Gastrocnemius medialis (tissue), 4 donors: ENCODE measurements at regions of chr20 and their contacts with region 1.

Region 1: DNA sequence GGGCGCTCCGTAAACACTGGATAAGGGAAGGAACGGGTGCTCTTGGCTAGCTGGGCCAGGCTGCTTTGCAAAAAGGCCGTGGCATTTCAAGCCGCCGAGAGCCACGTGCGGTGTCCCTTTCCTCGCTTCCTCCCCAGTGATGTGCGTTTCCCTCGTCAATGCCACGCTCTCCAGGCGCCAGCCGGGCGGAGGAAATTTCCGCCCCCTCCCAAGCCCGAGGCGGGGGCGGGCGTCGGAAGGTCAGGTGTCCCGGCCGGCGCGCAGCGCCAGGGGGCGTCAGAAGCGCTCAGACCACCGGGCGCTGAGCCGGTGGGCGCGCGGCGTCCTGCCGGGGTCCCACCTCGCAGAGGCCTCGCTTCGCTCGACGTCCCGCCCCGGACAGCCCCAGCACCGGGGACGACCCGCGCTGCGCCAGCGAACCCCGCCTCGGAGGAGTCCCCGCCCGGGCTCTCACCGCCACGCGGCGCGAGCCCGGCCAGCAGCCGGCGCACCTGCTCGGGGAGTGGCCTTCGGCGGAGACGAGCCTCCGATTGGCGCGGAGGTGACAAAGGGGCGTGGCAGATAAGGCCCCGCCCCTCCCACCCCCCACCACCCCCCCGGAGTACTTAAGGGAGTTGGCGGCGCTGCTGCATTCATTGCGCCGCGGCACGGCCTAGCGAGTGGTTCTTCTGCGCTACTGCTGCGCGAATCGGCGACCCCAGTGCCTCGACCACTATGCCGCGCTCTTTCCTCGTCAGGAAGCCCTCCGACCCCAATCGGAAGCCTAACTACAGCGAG is at the start of gene SNAI1:
- DNase-seq: peak; percentile 71 to 79
- ATAC-seq: peak; percentile 83 to 86
- H3K4me3 ChIP-seq: peak within 1 kb of the TSS; percentile 48 to 69 (median 56)
- H3K27ac ChIP-seq: peak within 1 kb of the TSS; percentile 75 to 81 (median 78)
- H3K4me1 ChIP-seq: peaks cover 28 to 38% of the 10 kb centered on the region in 2 donors
- H3K27me3 ChIP-seq: no peaks in the 10 kb centered on the region
- CTCF ChIP-seq: peak; percentile 39 to 80 (median 71)
- POLR2A ChIP-seq: peak; percentile 77
- total RNA-seq, gene SNAI1: 0.61 to 3.5 (median 1.3) TPM

Region 2: GRCh38 chr20:50070991-50071888 is 88.7 kb after region 1 on chr20:
- in situ Hi-C with region 1: loop called (anchors 5 kb)
- intact Hi-C with region 1: loop called (anchors 1 kb)
- DNase-seq: peak; percentile 60 to 79
- ATAC-seq: peak; percentile 88 to 92
- H3K4me3 ChIP-seq: peak overlapping the region in 3 of 4 donors; percentile 41 to 62 (median 44)
- H3K27ac ChIP-seq: no peak overlapping the region
- H3K4me1 ChIP-seq: peaks cover 5 to 9% of the 10 kb centered on the region in 2 donors
- H3K27me3 ChIP-seq: no peaks in the 10 kb centered on the region
- CTCF ChIP-seq: peak; percentile 99 to 100 (median 99)
- POLR2A ChIP-seq: no peak

Region 3: GRCh38 chr20:50085452-50086365 is 103.2 kb after region 1 on chr20:
- in situ Hi-C with region 1: no loop called
- intact Hi-C with region 1: loop called (anchors 5 kb)
- DNase-seq: no peak
- ATAC-seq: peak; percentile 81 to 83
- H3K4me3 ChIP-seq: peak overlapping the region in 3 of 4 donors; percentile 27 to 39 (median 34)
- H3K27ac ChIP-seq: peak overlapping the region; percentile 48 to 70 (median 60)
- H3K4me1 ChIP-seq: peaks cover 17 to 29% of the 10 kb centered on the region in 2 donors
- H3K27me3 ChIP-seq: no peaks in the 10 kb centered on the region
- CTCF ChIP-seq: peak; percentile 47 to 84 (median 71)
- POLR2A ChIP-seq: no peak

Region 4: GRCh38 chr20:50165684-50166554 is 183.4 kb after region 1 on chr20:
- in situ Hi-C with region 1: loop called in 2 of 4 experiments (anchors 10 kb)
- intact Hi-C with region 1: loop called (anchors 5 kb)
- DNase-seq: peak; percentile 99 to 100
- ATAC-seq: peak; percentile 88 to 96
- H3K4me3 ChIP-seq: peak overlapping the region; percentile 42 to 56 (median 46)
- H3K27ac ChIP-seq: peak overlapping the region; percentile 87 to 98 (median 96)
- H3K4me1 ChIP-seq: peaks cover 28 to 41% of the 10 kb centered on the region in 2 donors
- H3K27me3 ChIP-seq: no peaks in the 10 kb centered on the region
- CTCF ChIP-seq: no peak
- POLR2A ChIP-seq: peak; percentile 36 to 63

Region 5: GRCh38 chr20:50172347-50173013 is 189.9 kb after region 1 on chr20:
- in situ Hi-C with region 1: loop called in 2 of 4 experiments (anchors 10 kb)
- intact Hi-C with region 1: loop called (anchors 5 kb)
- DNase-seq: peak; percentile 82 to 90
- ATAC-seq: peak; percentile 86 to 87
- H3K4me3 ChIP-seq: peak overlapping the region; percentile 61 to 66 (median 64)
- H3K27ac ChIP-seq: peak overlapping the region; percentile 87 to 91 (median 90)
- H3K4me1 ChIP-seq: peaks cover 16 to 22% of the 10 kb centered on the region in 2 donors
- H3K27me3 ChIP-seq: no peaks in the 10 kb centered on the region
- CTCF ChIP-seq: no peak
- POLR2A ChIP-seq: peak; percentile 82 to 86

Region 6: DNA sequence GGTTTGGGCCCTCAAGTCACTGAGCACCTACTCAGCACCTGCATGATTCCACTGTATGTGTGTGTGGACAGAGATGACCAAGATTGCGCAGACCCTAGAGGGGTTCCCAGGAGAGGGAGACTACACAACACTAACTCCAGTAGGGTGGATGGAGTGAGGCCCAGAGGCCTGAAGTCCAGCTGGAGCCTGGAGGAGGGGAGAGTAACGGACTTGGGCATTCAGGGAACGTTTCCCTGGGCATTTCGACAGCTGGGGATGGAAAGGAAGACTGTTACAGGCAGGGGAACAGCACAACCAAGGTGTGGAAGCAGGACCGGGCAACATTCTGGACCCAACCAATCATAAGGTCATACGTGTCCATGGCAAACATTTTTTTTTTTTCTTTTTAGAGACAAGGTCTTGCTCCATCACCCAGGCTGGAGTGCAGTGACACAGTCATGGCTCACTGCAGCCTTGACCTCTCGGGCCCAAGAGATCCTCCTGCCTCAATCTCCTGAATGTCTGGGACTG is 197.0 kb after region 1 on chr20:
- in situ Hi-C with region 1: loop called in 1 of 4 experiments (anchors 10 kb)
- intact Hi-C with region 1: loop called (anchors 1 kb)
- DNase-seq: no peak
- ATAC-seq: peak; percentile 8 to 26
- H3K4me3 ChIP-seq: no peak overlapping the region
- H3K27ac ChIP-seq: no peak overlapping the region
- H3K4me1 ChIP-seq: peaks cover 0 to under 1% of the 10 kb centered on the region in 2 donors
- H3K27me3 ChIP-seq: no peaks in the 10 kb centered on the region
- CTCF ChIP-seq: peak in 1 of 5 experiments; percentile 39
- POLR2A ChIP-seq: no peak

Region 7: DNA sequence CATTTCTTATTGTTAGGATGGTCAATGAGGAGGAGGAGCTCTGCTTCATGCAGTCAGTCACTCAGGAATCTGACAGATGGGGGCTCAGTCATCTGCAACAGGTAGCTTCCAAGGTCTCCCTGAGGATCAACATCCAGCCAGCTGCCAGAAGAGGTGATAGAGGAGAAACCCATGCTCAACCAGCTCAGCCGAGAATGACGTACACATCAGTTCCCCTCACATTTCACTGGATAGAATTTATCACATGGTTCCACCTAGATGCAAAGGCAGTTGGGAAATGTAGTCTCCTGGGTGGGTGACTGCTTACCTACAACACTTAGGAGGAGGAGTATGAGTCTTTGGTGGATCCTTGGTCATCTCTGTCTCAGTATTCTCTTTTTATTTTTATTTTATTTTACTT is 352.6 kb after region 1 on chr20:
- in situ Hi-C with region 1: no loop called
- intact Hi-C with region 1: no loop called
- DNase-seq: no peak
- ATAC-seq: peak in 1 of 2 donors; percentile 58
- H3K4me3 ChIP-seq: no peak overlapping the region
- H3K27ac ChIP-seq: no peak overlapping the region
- H3K4me1 ChIP-seq: peaks cover 6 to 10% of the 10 kb centered on the region in 2 donors
- H3K27me3 ChIP-seq: no peaks in the 10 kb centered on the region
- CTCF ChIP-seq: no peak
- POLR2A ChIP-seq: no peak